ENCODE measurements at regions of chr2 and their contacts with region 1.

Region 1: GRCh38 chr2:112433932-112434730 is 686 bp upstream of the RGPD8 start:
- DNase-seq: no peak
- H3K4me3 ChIP-seq: peak overlapping the region in 1 of 2 donors; percentile 13
- H3K27ac ChIP-seq: no peak overlapping the region
- H3K4me1 ChIP-seq: no peaks in the 10 kb centered on the region
- H3K27me3 ChIP-seq: no peaks in the 10 kb centered on the region
- CTCF ChIP-seq: no peak
- POLR2A ChIP-seq: no peak

Region 2: GRCh38 chr2:112259509-112260294 is 174.4 kb before region 1 on chr2:
- intact Hi-C with region 1: loop called (anchors 10 kb)
- DNase-seq: peak; percentile 87
- H3K4me3 ChIP-seq: no peak overlapping the region
- H3K27ac ChIP-seq: no peak overlapping the region
- H3K4me1 ChIP-seq: no peaks in the 10 kb centered on the region
- H3K27me3 ChIP-seq: no peaks in the 10 kb centered on the region
- CTCF ChIP-seq: peak; percentile 55 to 85 (median 63)
- POLR2A ChIP-seq: no peak